ENCODE measurements at regions of chr4 and their contacts with region 1.

Region 1: GRCh38 chr4:137124278-137124932 is 407.9 kb downstream of the PCDH18 start:
- DNase-seq: no peak
- ATAC-seq: peak; percentile 96

Region 2: DNA sequence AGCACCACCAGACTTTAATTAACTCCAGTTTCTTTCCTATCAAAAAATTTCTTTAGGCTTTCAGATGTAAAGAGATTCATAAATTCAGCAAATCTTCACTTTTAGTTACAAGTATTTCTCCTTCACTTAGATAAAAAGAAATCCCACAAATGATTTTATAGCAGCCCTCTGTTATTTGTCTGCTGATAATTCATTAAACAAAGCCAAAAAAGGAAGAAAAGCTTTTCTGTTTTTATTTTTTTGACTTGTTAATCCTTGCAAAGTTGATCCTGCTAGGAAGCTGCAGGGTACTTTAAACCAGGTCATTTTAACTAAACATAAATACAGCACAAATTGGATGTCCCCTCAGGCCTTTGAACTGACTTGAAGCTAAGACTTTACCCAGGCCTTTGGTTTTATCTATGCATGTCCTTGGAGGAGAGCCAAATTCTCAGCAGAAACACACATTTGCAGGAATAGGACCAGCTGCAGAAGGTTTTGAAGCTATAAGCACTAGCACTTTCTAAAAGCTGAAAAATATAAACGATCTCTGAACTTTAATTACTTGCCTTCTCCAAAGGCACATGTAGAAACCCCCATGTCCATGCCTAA is 350.4 kb after region 1 on chr4:
- intact Hi-C with region 1: no loop called
- DNase-seq: no peak
- ATAC-seq: no peak

Region 3: GRCh38 chr4:138090150-138090917 is 965.9 kb after region 1 on chr4:
- intact Hi-C with region 1: loop called (anchors 10 kb)
- DNase-seq: no peak
- ATAC-seq: peak; percentile 88

Measured in sciatic nerve (tissue), 2 donors.